ENCODE measurements at regions of chr6 and their contacts with region 1.

Region 1: GRCh38 chr6:15389765-15390723 is 144.2 kb downstream of the JARID2 start:
- DNase-seq: peak; percentile 66
- ATAC-seq: peak; percentile 73
- H3K4me3 ChIP-seq: no peak overlapping the region
- H3K27ac ChIP-seq: no peak overlapping the region
- H3K4me1 ChIP-seq: peaks cover 28% of the 10 kb centered on the region
- H3K27me3 ChIP-seq: no peaks in the 10 kb centered on the region
- CTCF ChIP-seq: peak; percentile 69
- POLR2A ChIP-seq: no peak
- RAD21 ChIP-seq: peak; percentile 86

Region 2: DNA sequence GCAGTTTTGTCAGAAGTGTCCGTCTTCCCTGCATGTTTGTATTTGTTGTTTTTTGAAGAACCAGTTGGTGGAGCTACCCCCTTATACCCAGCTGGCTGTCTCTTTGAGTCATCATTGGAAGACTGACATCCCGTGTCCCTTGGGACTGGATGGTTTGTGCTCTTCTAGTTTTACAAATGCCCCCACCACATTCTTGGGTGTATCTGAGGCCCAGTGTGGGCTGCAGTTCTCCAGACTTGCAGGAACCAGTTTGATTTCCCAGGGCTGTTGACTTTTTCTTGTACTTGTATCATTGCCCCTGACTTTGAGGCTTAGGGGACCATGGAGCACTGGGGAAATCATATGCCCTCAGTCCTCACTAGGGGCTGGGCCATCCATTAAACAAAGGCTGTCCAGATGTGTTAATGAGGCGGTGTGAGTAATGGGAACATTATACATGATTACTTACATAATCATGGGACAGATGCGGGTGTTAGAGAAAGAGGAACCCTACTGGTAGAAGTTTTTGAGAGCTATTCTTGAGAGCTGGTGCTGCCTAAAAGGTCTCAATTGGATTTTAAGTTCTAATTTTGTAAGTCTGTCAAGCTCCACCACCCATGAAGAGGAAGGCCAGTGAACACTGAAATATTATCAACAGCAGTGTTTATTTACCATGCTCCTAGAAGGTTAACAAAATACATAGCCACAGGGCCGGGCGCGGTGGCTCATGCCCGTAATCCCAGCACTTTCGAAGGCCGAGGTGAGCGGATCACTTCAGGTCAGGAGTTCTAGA is 135.8 kb before region 1 on chr6:
- CTCF ChIA-PET with region 1: no interaction called
- POLR2A ChIA-PET with region 1: no interaction called
- dilution Hi-C with region 1: no loop called
- in situ Hi-C with region 1: loop called (anchors 10 kb)
- intact Hi-C with region 1: no loop called
- DNase-seq: no peak
- ATAC-seq: no peak
- H3K4me3 ChIP-seq: no peak overlapping the region
- H3K27ac ChIP-seq: no peak overlapping the region
- H3K4me1 ChIP-seq: peaks cover 10% of the 10 kb centered on the region
- H3K27me3 ChIP-seq: no peaks in the 10 kb centered on the region
- CTCF ChIP-seq: 0 out of 2 replicates have a peak, but pooled peaks have one; percentile 4
- POLR2A ChIP-seq: no peak
- RAD21 ChIP-seq: no peak

Region 3: GRCh38 chr6:15287670-15288375 is 102.2 kb before region 1 on chr6:
- CTCF ChIA-PET with region 1: no interaction called
- POLR2A ChIA-PET with region 1: no interaction called
- dilution Hi-C with region 1: no loop called
- in situ Hi-C with region 1: no loop called
- intact Hi-C with region 1: no loop called
- DNase-seq: no peak
- ATAC-seq: no peak
- H3K4me3 ChIP-seq: no peak overlapping the region
- H3K27ac ChIP-seq: no peak overlapping the region
- H3K4me1 ChIP-seq: peaks cover 13% of the 10 kb centered on the region
- H3K27me3 ChIP-seq: no peaks in the 10 kb centered on the region
- CTCF ChIP-seq: no peak
- POLR2A ChIP-seq: no peak
- RAD21 ChIP-seq: no peak

Region 4: DNA sequence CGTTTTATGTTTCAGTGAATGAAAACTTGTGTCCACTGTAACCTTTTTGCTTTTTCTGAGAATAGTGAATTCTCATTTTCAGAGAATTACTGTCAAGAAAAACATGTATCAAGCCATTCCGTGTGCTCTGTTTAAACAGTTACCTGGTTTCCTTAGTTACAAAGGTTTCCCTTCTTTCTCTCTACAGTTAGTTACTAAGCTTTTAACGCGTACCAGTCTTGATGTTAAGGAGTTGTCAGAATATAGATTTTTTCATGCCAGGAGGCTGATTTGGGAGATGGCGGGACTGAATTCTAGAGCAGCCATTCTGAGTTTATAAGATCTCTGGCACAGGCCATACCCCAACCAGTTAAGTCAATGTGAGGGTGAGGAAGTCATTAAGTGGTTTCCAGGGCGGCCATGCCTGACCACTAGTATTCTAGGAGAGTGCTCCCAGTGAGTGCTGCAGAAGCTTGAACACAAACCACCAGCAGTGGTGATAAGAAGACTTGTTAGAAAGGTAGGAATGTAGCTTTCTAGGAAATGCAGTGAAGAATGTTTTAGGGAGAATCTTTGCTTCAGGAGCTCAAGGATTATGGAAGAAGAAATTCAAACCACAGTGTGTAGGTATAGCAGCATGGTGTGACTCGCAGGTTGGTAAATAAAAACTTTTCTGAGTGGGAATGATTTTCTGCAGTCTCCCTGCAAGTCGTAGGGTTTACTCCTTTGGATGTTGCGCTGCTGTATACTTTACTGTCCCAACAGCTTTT is 31.3 kb before region 1 on chr6:
- CTCF ChIA-PET with region 1: no interaction called
- POLR2A ChIA-PET with region 1: no interaction called
- dilution Hi-C with region 1: no loop called
- in situ Hi-C with region 1: no loop called
- intact Hi-C with region 1: loop called (anchors 1 kb)
- DNase-seq: peak; percentile 46
- ATAC-seq: peak; percentile 28
- H3K4me3 ChIP-seq: no peak overlapping the region
- H3K27ac ChIP-seq: no peak overlapping the region
- H3K4me1 ChIP-seq: peaks cover 19% of the 10 kb centered on the region
- H3K27me3 ChIP-seq: no peaks in the 10 kb centered on the region
- CTCF ChIP-seq: no peak
- POLR2A ChIP-seq: no peak
- RAD21 ChIP-seq: no peak

Region 5: GRCh38 chr6:15491255-15491985 is 101.4 kb after region 1 on chr6:
- CTCF ChIA-PET with region 1: no interaction called
- POLR2A ChIA-PET with region 1: no interaction called
- dilution Hi-C with region 1: no loop called
- in situ Hi-C with region 1: no loop called
- intact Hi-C with region 1: loop called (anchors 2 kb)
- DNase-seq: peak; percentile 78
- ATAC-seq: peak; percentile 91
- H3K4me3 ChIP-seq: no peak overlapping the region
- H3K27ac ChIP-seq: peak overlapping the region; percentile 30; the same call in 1 of the 2 replicates
- H3K4me1 ChIP-seq: peaks cover 13% of the 10 kb centered on the region
- H3K27me3 ChIP-seq: no peaks in the 10 kb centered on the region
- CTCF ChIP-seq: peak; percentile 91
- POLR2A ChIP-seq: no peak
- RAD21 ChIP-seq: peak; percentile 90

Measured in IMR-90 (cell line).